Natural killer cell (primary cell): ENCODE measurements at regions of chr10 and their contacts with region 1.

Region 1: DNA sequence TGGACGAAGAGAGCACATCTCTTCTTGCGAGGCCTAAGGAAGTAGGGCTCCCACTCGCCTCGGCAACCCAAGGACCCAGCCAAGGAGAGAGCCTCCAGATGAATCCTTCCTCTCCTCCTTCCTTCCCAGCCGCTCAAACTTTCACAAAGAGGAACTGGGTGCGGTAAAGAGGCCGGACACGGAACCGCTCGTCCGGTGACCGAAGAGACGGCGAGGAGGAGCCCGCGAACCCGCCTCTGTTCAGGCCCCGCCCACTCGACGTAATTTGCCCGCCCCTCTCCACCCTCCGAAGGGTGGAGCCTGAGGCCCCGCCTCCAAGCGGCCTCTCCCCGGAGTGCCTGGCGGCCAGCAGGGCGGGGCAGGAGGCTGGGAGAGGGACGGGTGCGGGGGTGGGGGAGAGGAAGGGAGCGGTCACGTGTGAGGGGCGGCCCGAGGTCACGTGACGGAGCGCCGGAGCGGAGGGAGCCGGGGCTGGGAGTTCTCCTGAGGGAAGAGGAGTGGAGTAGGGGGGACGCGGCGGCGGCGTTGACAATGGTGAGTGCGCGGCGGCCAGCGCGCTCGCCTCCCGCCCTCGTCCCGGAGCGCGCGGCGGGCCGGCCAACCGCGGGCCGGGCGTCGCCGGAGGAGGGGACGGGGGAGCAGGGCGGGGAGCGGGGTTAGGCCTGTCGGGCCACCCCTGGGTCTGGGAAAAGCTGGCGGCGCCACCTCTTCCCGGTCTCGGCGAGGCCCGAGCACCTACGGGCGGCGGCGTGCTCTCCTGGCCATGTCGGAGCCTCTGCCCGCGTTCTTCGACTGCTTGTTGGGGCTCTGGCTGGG is at the start of gene VPS26A:
- DNase-seq: peak; percentile 99 to 100
- ATAC-seq: peak; percentile 92 to 99 (median 93)
- H3K4me3 ChIP-seq: peak within 1 kb of the TSS; percentile 64
- H3K4me3 Mint-ChIP-seq: peak within 1 kb of the TSS; percentile 95
- H3K27ac ChIP-seq: peak within 1 kb of the TSS; percentile 92
- H3K27ac Mint-ChIP-seq: peak within 1 kb of the TSS; percentile 96
- H3K4me1 ChIP-seq: peaks cover 17% of the 10 kb centered on the region
- H3K4me1 Mint-ChIP-seq: peaks cover 16 to 21% of the 10 kb centered on the region in 2 donors
- H3K27me3 ChIP-seq: no peaks in the 10 kb centered on the region
- H3K27me3 Mint-ChIP-seq: no peaks in the 10 kb centered on the region
- CTCF ChIP-seq: no peak
- total RNA-seq, gene VPS26A: 62.6 to 86.4 (median 86.2) TPM

Region 2: DNA sequence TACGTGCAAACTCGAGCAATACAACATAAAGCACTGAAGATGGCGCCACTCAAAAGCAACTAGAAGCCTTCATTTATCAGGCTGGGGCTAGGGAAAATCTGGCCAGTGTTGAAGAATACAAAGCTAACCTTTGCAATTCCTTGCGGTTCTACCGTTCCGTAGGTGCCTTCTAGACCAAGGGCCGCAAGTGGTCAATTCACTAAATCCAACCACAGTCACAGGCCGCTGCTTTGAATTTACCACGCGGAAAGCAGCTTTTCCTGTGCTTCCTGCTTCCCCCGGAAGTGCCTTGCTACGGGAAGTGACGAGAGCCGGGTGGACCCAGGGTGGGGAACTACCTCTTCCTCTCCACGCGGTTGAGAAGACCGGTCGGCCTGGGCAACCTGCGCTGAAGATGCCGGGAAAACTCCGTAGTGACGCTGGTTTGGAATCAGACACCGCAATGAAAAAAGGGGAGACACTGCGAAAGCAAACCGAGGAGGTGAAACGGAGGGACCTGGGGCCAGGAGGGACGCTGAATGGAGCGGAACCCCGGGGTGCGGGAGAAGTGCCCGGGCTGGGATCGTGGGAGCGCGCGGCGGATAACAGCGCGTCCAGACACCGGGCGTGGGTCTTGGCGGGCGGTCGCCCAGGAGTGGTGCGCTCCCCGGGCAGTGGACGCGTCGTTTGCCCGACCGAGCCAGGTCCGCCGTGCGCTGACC is 168.0 kb before region 1 on chr10 and contains the start of gene DDX21:
- intact Hi-C with region 1: loop called (anchors 2 kb)
- DNase-seq: peak; percentile 81 to 94
- ATAC-seq: peak; percentile 84 to 93 (median 87)
- H3K4me3 ChIP-seq: peak within 1 kb of the TSS; percentile 72
- H3K4me3 Mint-ChIP-seq: peak within 1 kb of the TSS; percentile 99
- H3K27ac ChIP-seq: peak within 1 kb of the TSS; percentile 86
- H3K27ac Mint-ChIP-seq: peak within 1 kb of the TSS; percentile 99
- H3K4me1 ChIP-seq: peaks cover 25% of the 10 kb centered on the region
- H3K4me1 Mint-ChIP-seq: peaks cover 31 to 38% of the 10 kb centered on the region in 2 donors
- H3K27me3 ChIP-seq: no peaks in the 10 kb centered on the region
- H3K27me3 Mint-ChIP-seq: no peaks in the 10 kb centered on the region
- CTCF ChIP-seq: peak; percentile 77
- total RNA-seq, gene DDX21: 59.0 to 62.1 (median 59.8) TPM

Region 3: GRCh38 chr10:69087590-69088470 is 36.1 kb before region 1 on chr10 and contains the start of gene SRGN:
- intact Hi-C with region 1: loop called (anchors 1 kb)
- DNase-seq: peak; percentile 75 to 94
- ATAC-seq: peak; percentile 41 to 71 (median 61)
- H3K4me3 ChIP-seq: peak within 1 kb of the TSS; percentile 53
- H3K4me3 Mint-ChIP-seq: peak within 1 kb of the TSS; percentile 89
- H3K27ac ChIP-seq: peak within 1 kb of the TSS; percentile 100
- H3K27ac Mint-ChIP-seq: peak within 1 kb of the TSS; percentile 96
- H3K4me1 ChIP-seq: peaks cover 38% of the 10 kb centered on the region
- H3K4me1 Mint-ChIP-seq: peaks cover 57 to 65% of the 10 kb centered on the region in 2 donors
- H3K27me3 ChIP-seq: no peaks in the 10 kb centered on the region
- H3K27me3 Mint-ChIP-seq: no peaks in the 10 kb centered on the region
- CTCF ChIP-seq: no peak
- total RNA-seq, gene SRGN: 636 to 954 (median 778) TPM

Region 4: DNA sequence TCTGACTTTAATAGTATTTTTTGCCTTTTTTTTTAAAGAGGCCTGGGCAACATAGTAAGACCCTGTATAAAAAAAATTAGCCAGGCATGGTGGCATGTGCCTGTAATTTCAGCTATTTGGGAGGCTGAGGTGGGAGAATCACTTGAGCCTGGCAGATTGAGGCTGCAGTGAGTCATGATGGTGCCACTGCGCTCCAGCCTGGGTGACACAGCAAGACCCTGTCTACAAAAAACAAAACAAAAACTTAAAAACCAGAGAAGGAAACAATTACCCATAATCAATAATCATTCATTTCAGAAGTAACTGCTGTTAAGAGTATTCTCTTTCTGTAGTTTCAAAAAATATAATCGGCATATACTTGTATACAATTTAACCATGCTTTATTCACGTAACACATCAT is 28.0 kb after region 1 on chr10:
- intact Hi-C with region 1: no loop called
- DNase-seq: no peak
- ATAC-seq: no peak
- H3K4me3 ChIP-seq: no peak overlapping the region
- H3K4me3 Mint-ChIP-seq: no peak overlapping the region
- H3K27ac ChIP-seq: no peak overlapping the region
- H3K27ac Mint-ChIP-seq: no peak overlapping the region
- H3K4me1 ChIP-seq: peaks cover 10% of the 10 kb centered on the region
- H3K4me1 Mint-ChIP-seq: peaks cover 23 to 52% of the 10 kb centered on the region in 2 donors
- H3K27me3 ChIP-seq: no peaks in the 10 kb centered on the region
- H3K27me3 Mint-ChIP-seq: no peaks in the 10 kb centered on the region
- CTCF ChIP-seq: no peak

Region 5: DNA sequence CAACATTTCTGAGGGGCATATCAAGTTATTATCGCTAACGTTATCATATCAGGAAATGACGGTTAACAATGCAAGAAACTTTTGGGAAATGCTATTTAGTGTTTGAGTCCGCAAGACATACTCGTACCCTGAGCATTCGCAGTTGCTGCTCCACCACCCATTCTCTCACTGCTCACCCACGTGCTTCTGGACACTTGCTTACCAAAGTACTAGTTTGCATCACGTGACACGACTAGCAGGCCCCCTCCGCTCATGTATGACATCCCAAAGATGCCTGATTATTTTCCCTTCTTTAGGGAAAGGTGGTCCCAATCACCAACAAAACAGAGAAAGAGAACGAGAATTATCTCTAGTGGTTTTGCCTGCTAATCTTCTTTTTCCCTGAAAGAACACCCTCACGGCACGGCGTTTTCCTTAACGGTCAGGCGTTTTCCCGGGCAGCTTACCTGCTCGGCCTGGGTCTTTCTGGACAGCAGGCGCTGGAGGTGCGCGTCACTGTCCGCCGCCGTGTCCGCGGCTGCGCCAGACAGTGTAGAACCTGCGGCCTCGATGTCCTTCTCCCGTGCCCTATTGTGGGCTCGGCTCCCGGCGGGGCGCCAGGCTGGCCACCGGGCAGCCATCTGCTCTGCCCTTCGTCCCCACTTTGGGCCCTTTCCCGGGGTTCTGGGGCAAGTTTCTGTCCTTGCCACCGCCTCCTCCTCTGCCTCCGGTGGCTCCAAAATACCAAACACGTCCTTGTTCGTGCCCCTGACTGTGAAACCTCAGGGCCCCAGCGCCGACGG is 56.0 kb after region 1 on chr10 and contains the start of gene SUPV3L1:
- intact Hi-C with region 1: loop called (anchors 2 kb)
- DNase-seq: peak; percentile 90 to 95
- ATAC-seq: peak; percentile 75 to 89 (median 81)
- H3K4me3 ChIP-seq: peak within 1 kb of the TSS; percentile 86
- H3K4me3 Mint-ChIP-seq: peak within 1 kb of the TSS; percentile 95
- H3K27ac ChIP-seq: peak within 1 kb of the TSS; percentile 92
- H3K27ac Mint-ChIP-seq: peak within 1 kb of the TSS; percentile 98 to 99
- H3K4me1 ChIP-seq: peaks cover 19% of the 10 kb centered on the region
- H3K4me1 Mint-ChIP-seq: peaks cover 44 to 58% of the 10 kb centered on the region in 2 donors
- H3K27me3 ChIP-seq: no peaks in the 10 kb centered on the region
- H3K27me3 Mint-ChIP-seq: no peaks in the 10 kb centered on the region
- CTCF ChIP-seq: no peak
- total RNA-seq, gene SUPV3L1: 56.6 to 104 (median 67.1) TPM

Region 6: GRCh38 chr10:69229622-69229928 is 105.6 kb after region 1 on chr10:
- intact Hi-C with region 1: loop called (anchors 2 kb)
- DNase-seq: no peak
- ATAC-seq: peak in 2 of 3 donors; percentile 49 to 58
- H3K4me3 ChIP-seq: peak overlapping the region; percentile 46
- H3K4me3 Mint-ChIP-seq: peak overlapping the region; percentile 86
- H3K27ac ChIP-seq: peak overlapping the region; percentile 94
- H3K27ac Mint-ChIP-seq: peak overlapping the region; percentile 87 to 94
- H3K4me1 ChIP-seq: peaks cover 64% of the 10 kb centered on the region
- H3K4me1 Mint-ChIP-seq: peaks cover 60 to 82% of the 10 kb centered on the region in 2 donors
- H3K27me3 ChIP-seq: no peaks in the 10 kb centered on the region
- H3K27me3 Mint-ChIP-seq: peaks cover 0 to 19% of the 10 kb centered on the region in 2 donors
- CTCF ChIP-seq: no peak

Region 7: DNA sequence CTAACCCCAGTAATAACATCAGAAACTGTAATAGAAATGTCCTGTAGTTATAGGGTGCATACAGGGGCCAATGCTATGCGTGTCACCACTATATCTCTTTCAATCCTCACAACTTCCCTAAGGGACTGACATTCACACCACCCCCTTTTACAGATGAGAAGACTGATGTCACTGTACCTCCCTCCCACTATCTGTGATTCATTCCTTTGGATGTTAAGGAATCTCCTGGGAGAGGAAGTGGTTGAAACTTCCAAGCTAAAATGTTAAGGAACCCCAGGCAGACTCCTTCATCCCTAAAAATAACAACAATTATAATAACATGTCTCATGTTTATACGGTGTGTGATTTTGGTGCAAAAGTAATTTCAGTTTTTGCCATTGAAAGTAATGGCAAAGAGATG is 683.2 kb after region 1 on chr10:
- intact Hi-C with region 1: no loop called
- DNase-seq: no peak
- ATAC-seq: no peak
- H3K4me3 ChIP-seq: no peak overlapping the region
- H3K4me3 Mint-ChIP-seq: no peak overlapping the region
- H3K27ac ChIP-seq: no peak overlapping the region
- H3K27ac Mint-ChIP-seq: no peak overlapping the region
- H3K4me1 ChIP-seq: peaks cover 27% of the 10 kb centered on the region
- H3K4me1 Mint-ChIP-seq: peaks cover 31 to 68% of the 10 kb centered on the region in 2 donors
- H3K27me3 ChIP-seq: peaks cover 12% of the 10 kb centered on the region
- H3K27me3 Mint-ChIP-seq: no peaks in the 10 kb centered on the region
- CTCF ChIP-seq: no peak